Activated naive CD8-positive, alpha-beta T cell treated with anti-CD3 and anti-CD28 coated beads, Interleukin-2, amount 10 ng/mL, durations not matched to agents 7 days and 5 days (primary cell): ENCODE measurements at regions of chr21 and their contacts with region 1.

Region 1: DNA sequence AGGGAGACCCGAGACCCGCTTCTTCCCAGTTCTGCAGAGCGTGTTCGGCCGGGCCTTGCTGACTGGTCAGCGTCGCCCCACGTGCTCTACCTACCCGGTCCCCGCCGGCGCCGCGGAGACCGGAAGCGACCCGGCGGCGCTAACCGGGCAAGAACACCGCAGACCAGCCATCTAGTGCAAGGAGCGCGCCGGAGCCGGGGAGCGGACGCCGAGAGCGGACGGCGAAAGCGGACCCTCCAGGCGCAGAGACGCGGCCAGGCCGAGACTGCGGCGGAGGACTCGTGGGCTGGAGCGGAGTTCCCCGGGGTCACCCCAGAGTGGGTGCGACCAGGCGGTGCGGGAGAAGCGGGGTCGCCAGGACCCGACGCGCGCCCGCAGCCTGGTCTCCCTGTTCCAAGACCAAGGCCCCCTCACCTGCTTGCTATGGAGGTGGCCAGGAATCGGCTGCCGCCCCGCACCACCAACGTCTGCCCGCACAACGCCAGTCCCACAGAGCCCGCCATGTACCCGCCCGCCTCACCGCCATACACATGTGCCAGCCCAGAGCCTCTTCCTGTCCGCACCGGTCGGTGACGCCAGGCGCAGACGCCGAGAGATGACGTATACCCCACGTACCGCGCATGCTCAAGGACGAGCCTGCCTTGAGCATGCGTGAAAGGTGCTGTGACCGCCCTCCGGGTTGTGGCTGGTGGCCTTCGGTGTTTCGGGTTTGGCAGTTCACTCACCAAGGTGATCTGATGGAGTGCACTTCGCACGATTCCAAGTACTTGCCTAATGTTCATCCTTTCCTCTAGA is at the start of gene WDR4:
- DNase-seq: peak; percentile 99
- ATAC-seq: peak; percentile 96
- H3K4me3 Mint-ChIP-seq: peak within 1 kb of the TSS; percentile 97
- H3K27ac Mint-ChIP-seq: peak within 1 kb of the TSS; percentile 98
- H3K4me1 Mint-ChIP-seq: peaks cover 25% of the 10 kb centered on the region
- H3K27me3 Mint-ChIP-seq: no peaks in the 10 kb centered on the region
- total RNA-seq, gene WDR4: 27.2 to 28.5 TPM

Region 2: GRCh38 chr21:42830456-42831455 is 48.4 kb before region 1 on chr21:
- POLR2A ChIA-PET with region 1: no interaction called
- DNase-seq: peak; percentile 45
- ATAC-seq: no peak
- H3K4me3 Mint-ChIP-seq: peak overlapping the region; percentile 51
- H3K27ac Mint-ChIP-seq: no peak overlapping the region
- H3K4me1 Mint-ChIP-seq: peaks cover 31% of the 10 kb centered on the region
- H3K27me3 Mint-ChIP-seq: peaks cover 40% of the 10 kb centered on the region

Region 3: DNA sequence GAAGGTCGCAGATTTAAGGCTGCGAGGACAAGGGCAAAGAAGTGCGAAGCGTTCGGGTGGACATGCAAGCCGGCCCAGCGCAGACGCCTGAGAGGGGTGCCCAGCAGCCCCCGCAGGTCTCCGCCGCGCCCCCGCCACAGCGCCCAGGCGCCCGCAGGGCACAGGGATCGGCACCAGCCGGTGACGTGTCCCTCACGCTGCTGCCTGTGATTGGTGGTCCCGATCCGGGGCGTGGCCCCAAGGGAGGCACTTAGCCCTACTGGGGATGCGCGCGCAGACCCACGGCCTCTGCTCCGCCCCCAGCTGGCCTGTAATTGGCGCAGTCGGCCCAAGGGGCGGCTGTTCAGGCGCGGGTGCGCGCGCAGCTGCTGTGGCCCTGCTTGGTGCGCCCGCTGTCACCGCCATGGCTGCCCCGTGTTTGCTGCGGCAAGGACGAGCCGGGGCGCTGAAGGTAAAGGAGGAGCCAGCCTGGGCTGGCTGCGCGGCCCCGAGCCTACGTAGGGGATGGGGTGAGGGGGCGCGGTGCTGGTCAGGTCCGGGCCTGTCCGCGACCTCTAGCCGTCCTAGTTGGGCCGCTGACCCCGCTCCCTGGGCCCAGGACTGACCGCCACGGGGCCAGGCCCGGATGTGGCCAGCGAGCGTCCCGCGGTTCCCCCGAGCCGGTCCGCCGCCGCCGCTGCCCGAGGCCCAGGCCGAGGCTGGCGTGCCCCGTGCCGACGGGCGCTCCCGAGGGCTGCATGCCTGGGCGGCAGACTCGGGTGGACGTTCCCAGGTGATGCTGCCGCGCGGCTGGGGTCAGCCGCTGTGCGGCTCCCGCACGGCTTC is 14.0 kb after region 1 on chr21 and contains the start of gene NDUFV3:
- POLR2A ChIA-PET with region 1: interaction called, 51 read pairs
- DNase-seq: peak; percentile 99
- ATAC-seq: peak; percentile 94
- H3K4me3 Mint-ChIP-seq: peak within 1 kb of the TSS; percentile 90
- H3K27ac Mint-ChIP-seq: peak within 1 kb of the TSS; percentile 93
- H3K4me1 Mint-ChIP-seq: peaks cover 8% of the 10 kb centered on the region
- H3K27me3 Mint-ChIP-seq: no peaks in the 10 kb centered on the region
- total RNA-seq, gene NDUFV3: 27.1 to 30.5 TPM

Region 4: GRCh38 chr21:42973991-42974831 is 95.0 kb after region 1 on chr21 and contains the start of gene PKNOX1:
- POLR2A ChIA-PET with region 1: no interaction called
- DNase-seq: peak; percentile 99
- ATAC-seq: peak; percentile 90
- H3K4me3 Mint-ChIP-seq: peak within 1 kb of the TSS; percentile 89
- H3K27ac Mint-ChIP-seq: peak within 1 kb of the TSS; percentile 94
- H3K4me1 Mint-ChIP-seq: peaks cover 28% of the 10 kb centered on the region
- H3K27me3 Mint-ChIP-seq: peaks cover 2% of the 10 kb centered on the region
- total RNA-seq, gene PKNOX1: 21.3 to 23.2 TPM